Activated T-helper 2 cell treated with anti-CD3 and anti-CD28 coated beads, Interferon-gamma antibody, Interleukin-2, Interleukin-4, amounts not matched to agents 10 μg/mL and 5 μg/mL and 100 μg/mL, durations not matched to agents 14 hours and 24 hours and 36 hours (primary cell): ENCODE measurements at regions of chr6 and their contacts with region 1.

Region 1: GRCh38 chr6:108748055-108748454 is 100.2 kb upstream of the ARMC2 start:
- DNase-seq: no peak
- H3K4me3 Mint-ChIP-seq: no peak overlapping the region
- H3K27ac Mint-ChIP-seq: no peak overlapping the region
- H3K4me1 Mint-ChIP-seq: peaks cover 6% of the 10 kb centered on the region
- H3K27me3 Mint-ChIP-seq: peaks cover 51% of the 10 kb centered on the region

Region 2: GRCh38 chr6:108714101-108714765 is 33.8 kb before region 1 on chr6:
- intact Hi-C with region 1: loop called (anchors 5 kb)
- DNase-seq: peak; percentile 13
- H3K4me3 Mint-ChIP-seq: no peak overlapping the region
- H3K27ac Mint-ChIP-seq: no peak overlapping the region
- H3K4me1 Mint-ChIP-seq: peaks cover 23% of the 10 kb centered on the region
- H3K27me3 Mint-ChIP-seq: peaks cover 8% of the 10 kb centered on the region